ENCODE measurements at regions of chr16 and their contacts with region 1.

Region 1: DNA sequence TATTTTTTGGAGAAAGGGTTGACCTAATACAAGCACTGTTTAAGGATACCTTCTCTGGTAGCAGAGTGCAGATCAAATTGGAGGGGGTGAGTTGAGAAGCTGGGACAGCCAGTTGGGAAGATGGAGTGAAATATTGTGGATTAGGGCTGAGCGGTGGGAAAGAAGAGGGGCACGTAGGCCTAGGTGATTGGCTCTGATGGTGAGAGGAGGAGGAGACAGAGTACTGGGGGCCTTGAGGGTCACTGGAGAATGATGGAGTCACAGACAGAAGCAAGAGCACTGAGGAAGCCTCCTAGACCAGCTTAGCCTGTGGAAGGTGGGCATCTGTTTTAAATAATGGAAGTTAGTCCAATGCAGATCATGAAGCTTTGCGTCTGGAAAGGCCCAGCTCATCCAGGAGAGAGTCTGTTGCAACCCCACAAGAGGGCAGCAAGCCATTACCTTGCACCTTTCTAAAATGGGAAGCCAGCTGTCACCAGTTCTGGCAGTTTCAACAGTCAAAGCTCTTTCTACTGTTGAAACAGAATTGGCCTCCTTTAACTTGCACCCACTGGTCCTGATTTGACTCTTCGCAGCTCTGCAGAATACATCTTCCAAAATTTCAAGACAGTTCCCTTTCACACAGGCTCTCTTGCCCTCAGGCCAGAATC is 11.8 kb downstream of the SLC9A5 start:
- DNase-seq: peak; percentile 50
- H3K4me3 ChIP-seq: no peak overlapping the region
- H3K27ac ChIP-seq: no peak overlapping the region
- H3K4me1 ChIP-seq: no peaks in the 10 kb centered on the region
- H3K27me3 ChIP-seq: peaks cover 3% of the 10 kb centered on the region
- CTCF ChIP-seq: peak; percentile 71 to 82

Region 2: DNA sequence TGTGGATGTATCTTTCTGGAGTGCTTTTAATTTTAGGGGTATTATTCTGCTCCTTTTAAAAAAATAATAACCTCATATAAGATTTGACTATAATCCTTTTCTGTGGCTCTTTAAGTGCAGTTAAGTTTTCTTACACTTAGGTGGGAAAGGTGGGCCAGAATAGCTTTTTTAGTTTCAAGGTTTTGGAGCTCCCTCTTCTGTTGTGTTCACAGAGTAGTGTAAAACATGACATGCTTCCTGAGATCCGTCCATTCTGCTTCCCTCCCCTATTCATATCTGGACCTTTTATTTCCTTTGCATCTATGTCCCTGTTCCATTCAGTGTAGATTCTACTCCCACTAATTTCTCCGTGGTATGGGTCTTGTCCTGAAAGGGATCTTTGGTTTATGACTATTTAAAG is 78.9 kb after region 1 on chr16:
- CTCF ChIA-PET with region 1: interaction called, 4 read pairs
- dilution Hi-C with region 1: no loop called
- in situ Hi-C with region 1: no loop called
- intact Hi-C with region 1: loop called (anchors 1 kb)
- DNase-seq: no peak
- H3K4me3 ChIP-seq: no peak overlapping the region
- H3K27ac ChIP-seq: no peak overlapping the region
- H3K4me1 ChIP-seq: peaks cover 5% of the 10 kb centered on the region
- H3K27me3 ChIP-seq: no peaks in the 10 kb centered on the region
- CTCF ChIP-seq: peak in 1 of 2 donors; percentile 34

Region 3: GRCh38 chr16:67399181-67399733 is 138.7 kb after region 1 on chr16:
- CTCF ChIA-PET with region 1: no interaction called
- dilution Hi-C with region 1: no loop called
- in situ Hi-C with region 1: loop called in 1 of 2 experiments (anchors 25 kb)
- intact Hi-C with region 1: loop called (anchors 2 kb)
- DNase-seq: no peak
- H3K4me3 ChIP-seq: no peak overlapping the region
- H3K27ac ChIP-seq: no peak overlapping the region
- H3K4me1 ChIP-seq: peaks cover 45% of the 10 kb centered on the region
- H3K27me3 ChIP-seq: no peaks in the 10 kb centered on the region
- CTCF ChIP-seq: peak in 1 of 2 donors; percentile 50

Region 4: GRCh38 chr16:67441271-67441753 is 180.8 kb after region 1 on chr16:
- CTCF ChIA-PET with region 1: no interaction called
- dilution Hi-C with region 1: loop called (anchors 5 kb)
- in situ Hi-C with region 1: no loop called
- intact Hi-C with region 1: no loop called
- DNase-seq: no peak
- H3K4me3 ChIP-seq: no peak overlapping the region
- H3K27ac ChIP-seq: no peak overlapping the region
- H3K4me1 ChIP-seq: no peaks in the 10 kb centered on the region
- H3K27me3 ChIP-seq: no peaks in the 10 kb centered on the region
- CTCF ChIP-seq: no peak

Region 5: GRCh38 chr16:67514382-67514828 is 253.9 kb after region 1 on chr16:
- CTCF ChIA-PET with region 1: no interaction called
- dilution Hi-C with region 1: no loop called
- in situ Hi-C with region 1: no loop called
- intact Hi-C with region 1: loop called (anchors 1 kb)
- DNase-seq: peak; percentile 75
- H3K4me3 ChIP-seq: no peak overlapping the region
- H3K27ac ChIP-seq: no peak overlapping the region
- H3K4me1 ChIP-seq: peaks cover 8% of the 10 kb centered on the region
- H3K27me3 ChIP-seq: no peaks in the 10 kb centered on the region
- CTCF ChIP-seq: peak; percentile 52 to 67